Caco-2 (cell line): ENCODE measurements at regions of chr10 and their contacts with region 1.

Region 1: GRCh38 chr10:65358565-65358964 is 1567.3 kb upstream of the LRRTM3 start:
- DNase-seq: peak; percentile 63 to 66
- H3K4me3 ChIP-seq: no peak overlapping the region
- H3K4me3 Mint-ChIP-seq: no peak overlapping the region
- H3K27ac Mint-ChIP-seq: no peak overlapping the region
- H3K4me1 ChIP-seq: no peaks in the 10 kb centered on the region
- H3K4me1 Mint-ChIP-seq: no peaks in the 10 kb centered on the region
- H3K27me3 ChIP-seq: no peaks in the 10 kb centered on the region
- H3K27me3 Mint-ChIP-seq: no peaks in the 10 kb centered on the region
- CTCF ChIP-seq: peak; percentile 84 to 93

Region 2: DNA sequence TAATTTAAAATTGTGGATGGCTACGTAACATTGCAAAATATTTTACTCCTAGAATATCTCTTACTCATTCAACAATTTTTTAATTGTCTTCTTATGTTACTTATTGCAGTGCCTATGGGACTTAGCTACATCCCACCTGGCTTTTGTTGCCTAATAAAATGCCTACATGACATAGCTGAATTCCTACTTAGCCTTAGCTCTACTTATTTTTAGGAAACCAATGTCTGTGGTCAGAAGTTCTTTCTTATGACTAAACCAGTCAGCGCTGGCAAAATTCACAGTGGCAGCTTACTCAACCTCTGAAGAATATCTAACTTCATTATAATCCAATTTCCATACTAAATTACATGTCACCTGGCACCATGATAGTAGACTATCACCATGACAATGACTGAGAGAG is 45.2 kb before region 1 on chr10:
- CTCF ChIA-PET with region 1: no interaction called
- POLR2A ChIA-PET with region 1: no interaction called
- intact Hi-C with region 1: no loop called
- DNase-seq: no peak
- H3K4me3 ChIP-seq: no peak overlapping the region
- H3K4me3 Mint-ChIP-seq: no peak overlapping the region
- H3K27ac Mint-ChIP-seq: no peak overlapping the region
- H3K4me1 ChIP-seq: peaks cover 4% of the 10 kb centered on the region
- H3K4me1 Mint-ChIP-seq: peaks cover 7% of the 10 kb centered on the region
- H3K27me3 ChIP-seq: no peaks in the 10 kb centered on the region
- H3K27me3 Mint-ChIP-seq: no peaks in the 10 kb centered on the region
- CTCF ChIP-seq: no peak

Region 3: DNA sequence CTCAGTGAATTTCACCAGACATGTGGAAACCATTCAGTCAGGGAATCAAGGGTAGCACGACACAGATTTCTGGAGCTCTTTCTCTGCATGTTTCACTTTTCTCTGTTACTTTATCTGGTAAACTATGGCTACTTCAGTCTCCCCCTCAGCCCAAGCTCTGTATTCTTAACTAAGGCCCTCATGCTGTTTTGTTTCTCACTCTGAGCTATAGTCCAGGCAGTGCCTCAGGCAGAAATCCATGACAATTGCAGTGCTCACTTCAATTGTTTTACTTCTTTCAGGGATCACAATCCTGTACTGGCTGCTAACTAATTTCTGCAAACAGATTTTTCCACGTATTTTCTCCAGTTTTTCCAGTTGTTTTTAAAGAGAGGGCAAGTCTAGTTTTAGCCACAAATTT is 32.7 kb before region 1 on chr10:
- CTCF ChIA-PET with region 1: no interaction called
- POLR2A ChIA-PET with region 1: no interaction called
- intact Hi-C with region 1: loop called (anchors 2 kb)
- DNase-seq: no peak
- H3K4me3 ChIP-seq: no peak overlapping the region
- H3K4me3 Mint-ChIP-seq: no peak overlapping the region
- H3K27ac Mint-ChIP-seq: peak overlapping the region; percentile 88
- H3K4me1 ChIP-seq: peaks cover 30% of the 10 kb centered on the region
- H3K4me1 Mint-ChIP-seq: peaks cover 24% of the 10 kb centered on the region
- H3K27me3 ChIP-seq: no peaks in the 10 kb centered on the region
- H3K27me3 Mint-ChIP-seq: no peaks in the 10 kb centered on the region
- CTCF ChIP-seq: no peak

Region 4: DNA sequence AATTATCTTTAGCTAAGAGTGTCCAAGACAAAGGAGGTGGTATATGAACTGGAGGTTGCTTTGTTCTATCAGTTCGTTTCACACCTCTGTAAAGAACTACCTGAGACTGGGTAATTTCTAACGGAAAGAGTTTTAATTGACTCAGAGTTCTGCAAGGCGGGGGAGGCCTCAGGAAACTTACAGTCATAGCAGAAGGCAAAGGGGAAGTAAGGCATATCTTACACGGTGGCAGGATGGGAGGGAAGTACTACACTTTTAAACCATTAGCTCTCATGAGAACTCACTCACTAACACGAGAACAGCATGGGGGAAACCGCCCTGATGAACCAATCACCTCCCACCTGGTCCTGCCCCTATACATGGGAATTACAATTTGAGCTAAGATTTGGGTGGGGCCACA is 365.0 kb after region 1 on chr10:
- CTCF ChIA-PET with region 1: no interaction called
- POLR2A ChIA-PET with region 1: no interaction called
- intact Hi-C with region 1: loop called (anchors 5 kb)
- DNase-seq: no peak
- H3K4me3 ChIP-seq: no peak overlapping the region
- H3K4me3 Mint-ChIP-seq: no peak overlapping the region
- H3K27ac Mint-ChIP-seq: no peak overlapping the region
- H3K4me1 ChIP-seq: no peaks in the 10 kb centered on the region
- H3K4me1 Mint-ChIP-seq: no peaks in the 10 kb centered on the region
- H3K27me3 ChIP-seq: no peaks in the 10 kb centered on the region
- H3K27me3 Mint-ChIP-seq: no peaks in the 10 kb centered on the region
- CTCF ChIP-seq: no peak

Region 5: GRCh38 chr10:66085906-66086305 is 727.3 kb after region 1 on chr10:
- CTCF ChIA-PET with region 1: no interaction called
- POLR2A ChIA-PET with region 1: no interaction called
- intact Hi-C with region 1: loop called (anchors 10 kb)
- DNase-seq: no peak
- H3K4me3 ChIP-seq: no peak overlapping the region
- H3K4me3 Mint-ChIP-seq: no peak overlapping the region
- H3K27ac Mint-ChIP-seq: no peak overlapping the region
- H3K4me1 ChIP-seq: no peaks in the 10 kb centered on the region
- H3K4me1 Mint-ChIP-seq: no peaks in the 10 kb centered on the region
- H3K27me3 ChIP-seq: no peaks in the 10 kb centered on the region
- H3K27me3 Mint-ChIP-seq: peaks cover 4% of the 10 kb centered on the region
- CTCF ChIP-seq: no peak

Region 6: DNA sequence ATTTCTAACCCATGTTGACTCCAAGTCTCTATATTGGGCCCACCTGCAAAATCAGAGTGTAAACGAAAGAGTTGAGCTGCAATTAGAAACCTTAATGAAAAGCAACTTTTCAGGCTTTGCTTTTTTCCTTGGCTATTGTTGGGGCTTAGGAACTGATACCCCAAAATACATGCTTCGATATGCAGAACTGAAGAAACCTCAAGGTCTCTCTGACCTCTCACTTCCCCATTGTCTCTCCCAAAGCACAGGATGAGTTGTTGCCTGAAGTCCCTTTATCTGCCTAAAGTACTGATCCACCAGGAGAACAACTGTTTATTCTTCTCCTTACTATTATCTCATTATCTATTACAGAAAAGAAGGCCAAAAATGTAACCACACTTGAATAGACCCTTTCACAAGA is 901.3 kb after region 1 on chr10:
- CTCF ChIA-PET with region 1: no interaction called
- POLR2A ChIA-PET with region 1: no interaction called
- intact Hi-C with region 1: no loop called
- DNase-seq: no peak
- H3K4me3 ChIP-seq: no peak overlapping the region
- H3K4me3 Mint-ChIP-seq: no peak overlapping the region
- H3K27ac Mint-ChIP-seq: peak overlapping the region; percentile 4
- H3K4me1 ChIP-seq: peaks cover 41% of the 10 kb centered on the region
- H3K4me1 Mint-ChIP-seq: peaks cover 30% of the 10 kb centered on the region
- H3K27me3 ChIP-seq: no peaks in the 10 kb centered on the region
- H3K27me3 Mint-ChIP-seq: no peaks in the 10 kb centered on the region
- CTCF ChIP-seq: no peak